ENCODE measurements at regions of chr1 and their contacts with region 1.

Region 1: GRCh38 chr1:235011599-235012435 is 116.8 kb downstream of the TOMM20 start:
- DNase-seq: peak; percentile 99
- H3K4me3 Mint-ChIP-seq: peak overlapping the region; percentile 56
- H3K27ac Mint-ChIP-seq: peak overlapping the region; percentile 94
- H3K4me1 Mint-ChIP-seq: peaks cover 89% of the 10 kb centered on the region
- H3K27me3 Mint-ChIP-seq: no peaks in the 10 kb centered on the region

Region 2: DNA sequence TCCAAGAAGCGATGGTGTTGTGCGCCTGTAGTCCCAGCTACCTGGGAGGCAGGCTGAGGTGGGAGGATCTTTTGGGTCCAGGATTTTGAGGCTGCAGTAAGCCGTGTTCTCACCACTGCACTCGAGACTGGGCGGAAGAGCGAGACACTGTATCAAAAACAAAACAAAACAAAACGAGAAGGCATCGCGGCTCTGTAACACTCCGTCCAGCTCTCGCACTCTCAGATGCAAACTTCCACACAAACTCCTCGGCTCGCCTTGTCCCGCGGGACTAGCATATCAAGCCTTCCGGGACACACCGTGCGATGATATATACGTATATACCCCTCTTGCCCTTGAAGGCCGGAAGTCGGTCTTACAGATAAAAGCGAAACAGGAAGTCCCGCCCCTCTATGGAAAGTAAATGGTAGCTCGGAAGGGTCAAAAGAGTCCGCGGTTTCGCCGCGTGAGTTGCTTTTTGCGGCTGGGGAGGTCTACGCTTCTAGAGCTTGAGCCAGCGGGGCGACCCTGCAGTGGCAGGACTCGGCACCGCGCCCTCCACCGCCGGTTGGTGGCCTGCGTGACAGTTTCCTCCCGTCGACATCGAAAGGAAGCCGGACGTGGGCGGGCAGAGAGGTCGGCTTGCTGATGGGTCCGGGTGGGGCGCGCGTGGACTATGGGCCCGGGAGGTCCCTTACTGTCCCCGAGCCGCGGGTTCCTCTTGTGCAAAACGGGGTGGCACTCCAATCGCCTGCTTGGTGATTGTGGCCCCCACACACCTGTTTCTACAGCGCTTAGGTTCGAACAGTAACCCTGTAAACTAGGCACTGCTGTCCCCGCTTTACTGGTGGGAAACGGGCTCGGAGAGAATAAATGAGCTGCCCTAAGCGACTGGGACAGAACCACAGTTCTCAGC is 638.5 kb before region 1 on chr1 and contains the start of gene COA6:
- CTCF ChIA-PET with region 1: no interaction called
- intact Hi-C with region 1: loop called (anchors 1 kb)
- DNase-seq: peak; percentile 90
- H3K4me3 Mint-ChIP-seq: peak within 1 kb of the TSS; percentile 96
- H3K27ac Mint-ChIP-seq: peak within 1 kb of the TSS; percentile 98
- H3K4me1 Mint-ChIP-seq: peaks cover 54% of the 10 kb centered on the region
- H3K27me3 Mint-ChIP-seq: no peaks in the 10 kb centered on the region
- total RNA-seq, gene COA6: 45.8 to 50.2 TPM

Region 3: GRCh38 chr1:234517110-234517802 is 494.6 kb before region 1 on chr1:
- CTCF ChIA-PET with region 1: no interaction called
- intact Hi-C with region 1: loop called (anchors 1 kb)
- DNase-seq: no peak
- H3K4me3 Mint-ChIP-seq: no peak overlapping the region
- H3K27ac Mint-ChIP-seq: no peak overlapping the region
- H3K4me1 Mint-ChIP-seq: peaks cover 24% of the 10 kb centered on the region
- H3K27me3 Mint-ChIP-seq: no peaks in the 10 kb centered on the region

Region 4: GRCh38 chr1:234730770-234731568 is 280.8 kb before region 1 on chr1:
- CTCF ChIA-PET with region 1: no interaction called
- intact Hi-C with region 1: loop called (anchors 1 kb)
- DNase-seq: peak; percentile 83
- H3K4me3 Mint-ChIP-seq: peak overlapping the region; percentile 25
- H3K27ac Mint-ChIP-seq: peak overlapping the region; percentile 89
- H3K4me1 Mint-ChIP-seq: peaks cover 51% of the 10 kb centered on the region
- H3K27me3 Mint-ChIP-seq: no peaks in the 10 kb centered on the region

Region 5: GRCh38 chr1:234933475-234933874 is 78.3 kb before region 1 on chr1:
- CTCF ChIA-PET with region 1: interaction called, 3 read pairs
- intact Hi-C with region 1: loop called (anchors 1 kb)
- DNase-seq: peak; percentile 61
- H3K4me3 Mint-ChIP-seq: no peak overlapping the region
- H3K27ac Mint-ChIP-seq: peak overlapping the region; percentile 84
- H3K4me1 Mint-ChIP-seq: peaks cover 58% of the 10 kb centered on the region
- H3K27me3 Mint-ChIP-seq: no peaks in the 10 kb centered on the region

Region 6: GRCh38 chr1:234997896-234998741 is 13.7 kb before region 1 on chr1:
- CTCF ChIA-PET with region 1: no interaction called
- intact Hi-C with region 1: no loop called
- DNase-seq: no peak
- H3K4me3 Mint-ChIP-seq: no peak overlapping the region
- H3K27ac Mint-ChIP-seq: no peak overlapping the region
- H3K4me1 Mint-ChIP-seq: peaks cover 15% of the 10 kb centered on the region
- H3K27me3 Mint-ChIP-seq: no peaks in the 10 kb centered on the region

Region 7: DNA sequence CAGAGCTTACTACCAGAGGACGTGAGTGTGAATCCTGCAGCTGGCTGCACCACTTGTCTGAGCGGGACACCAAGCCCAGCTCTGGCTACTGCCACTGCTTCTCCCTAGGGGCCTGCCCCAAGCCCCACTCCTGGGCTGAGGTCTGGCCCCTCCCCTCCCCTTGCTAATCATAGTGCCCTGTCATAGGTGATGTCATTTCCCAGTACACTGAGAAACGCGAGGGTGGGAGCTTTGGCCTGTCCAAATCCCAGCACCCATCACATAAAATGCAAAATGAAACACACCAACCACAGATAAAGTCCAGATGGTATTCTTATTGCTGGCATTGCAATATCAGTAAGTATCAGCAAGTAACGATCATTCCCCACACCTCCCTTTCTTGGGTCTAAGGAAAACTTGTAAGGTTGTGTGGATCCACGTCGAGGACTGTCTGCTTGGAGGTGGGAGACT is 39.1 kb after region 1 on chr1:
- CTCF ChIA-PET with region 1: interaction called, 3 read pairs
- intact Hi-C with region 1: loop called (anchors 1 kb)
- DNase-seq: peak; percentile 37
- H3K4me3 Mint-ChIP-seq: no peak overlapping the region
- H3K27ac Mint-ChIP-seq: no peak overlapping the region
- H3K4me1 Mint-ChIP-seq: peaks cover 25% of the 10 kb centered on the region
- H3K27me3 Mint-ChIP-seq: no peaks in the 10 kb centered on the region

Region 8: GRCh38 chr1:236281654-236282424 is 1270.0 kb after region 1 on chr1 and contains the start of gene ERO1B:
- CTCF ChIA-PET with region 1: no interaction called
- intact Hi-C with region 1: loop called (anchors 10 kb)
- DNase-seq: peak; percentile 95
- H3K4me3 Mint-ChIP-seq: peak within 1 kb of the TSS; percentile 91
- H3K27ac Mint-ChIP-seq: peak within 1 kb of the TSS; percentile 66
- H3K4me1 Mint-ChIP-seq: peaks cover 41% of the 10 kb centered on the region
- H3K27me3 Mint-ChIP-seq: no peaks in the 10 kb centered on the region
- total RNA-seq, gene ERO1B: 1.6 to 2.5 TPM

Measured in activated naive CD4-positive, alpha-beta T cell treated with anti-CD3 and anti-CD28 coated beads for 36 hours (primary cell).